ENCODE measurements at regions of chr7 and their contacts with region 1.

Region 1: GRCh38 chr7:35906191-35906908 is 105.5 kb downstream of the SEPTIN7 start:
- DNase-seq: peak; percentile 87
- H3K4me3 ChIP-seq: no peak overlapping the region
- H3K27ac ChIP-seq: no peak overlapping the region
- H3K4me1 ChIP-seq: peaks cover 32% of the 10 kb centered on the region
- H3K27me3 ChIP-seq: no peaks in the 10 kb centered on the region
- CTCF ChIP-seq: peak; percentile 85

Region 2: DNA sequence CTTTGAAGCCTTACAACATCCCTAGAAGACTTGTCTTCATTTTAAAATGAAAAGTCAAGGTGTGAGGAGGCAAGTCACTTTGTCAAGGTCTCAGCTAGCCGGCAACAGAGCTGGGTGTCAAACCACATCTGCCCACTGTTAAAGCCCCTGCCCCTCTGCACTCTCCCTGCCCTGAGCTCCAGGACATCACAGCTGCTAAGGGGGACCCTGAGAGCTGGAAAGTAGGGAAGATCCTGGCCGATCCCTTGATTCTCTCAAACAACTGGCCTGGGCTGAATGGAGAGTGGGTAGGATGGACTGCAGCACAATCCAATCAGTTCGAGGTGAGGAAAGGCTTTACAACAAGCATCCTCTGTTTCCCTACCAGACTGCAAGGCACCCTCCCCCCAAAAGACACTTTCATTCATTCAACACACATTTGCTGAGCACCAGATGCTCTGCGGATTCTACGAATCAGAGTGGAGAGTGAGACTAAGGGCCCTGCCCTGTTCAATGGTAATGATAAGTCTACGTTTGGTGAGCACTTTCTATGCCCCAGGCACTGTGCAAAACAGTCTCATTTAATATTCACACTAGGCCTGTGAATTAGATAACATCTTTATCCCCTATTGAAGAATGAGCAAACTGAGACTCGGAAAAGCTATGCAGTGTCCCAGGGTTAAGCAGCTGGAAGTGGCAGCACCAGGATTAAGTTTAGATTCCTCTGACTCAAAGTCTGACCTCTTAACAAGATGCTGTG is 359.5 kb before region 1 on chr7:
- CTCF ChIA-PET with region 1: no interaction called
- POLR2A ChIA-PET with region 1: no interaction called
- intact Hi-C with region 1: loop called (anchors 5 kb)
- DNase-seq: no peak
- H3K4me3 ChIP-seq: no peak overlapping the region
- H3K27ac ChIP-seq: no peak overlapping the region
- H3K4me1 ChIP-seq: no peaks in the 10 kb centered on the region
- H3K27me3 ChIP-seq: no peaks in the 10 kb centered on the region
- CTCF ChIP-seq: no peak

Measured in A673 (cell line).